ENCODE measurements at regions of chrX and their contacts with region 1.

Region 1: DNA sequence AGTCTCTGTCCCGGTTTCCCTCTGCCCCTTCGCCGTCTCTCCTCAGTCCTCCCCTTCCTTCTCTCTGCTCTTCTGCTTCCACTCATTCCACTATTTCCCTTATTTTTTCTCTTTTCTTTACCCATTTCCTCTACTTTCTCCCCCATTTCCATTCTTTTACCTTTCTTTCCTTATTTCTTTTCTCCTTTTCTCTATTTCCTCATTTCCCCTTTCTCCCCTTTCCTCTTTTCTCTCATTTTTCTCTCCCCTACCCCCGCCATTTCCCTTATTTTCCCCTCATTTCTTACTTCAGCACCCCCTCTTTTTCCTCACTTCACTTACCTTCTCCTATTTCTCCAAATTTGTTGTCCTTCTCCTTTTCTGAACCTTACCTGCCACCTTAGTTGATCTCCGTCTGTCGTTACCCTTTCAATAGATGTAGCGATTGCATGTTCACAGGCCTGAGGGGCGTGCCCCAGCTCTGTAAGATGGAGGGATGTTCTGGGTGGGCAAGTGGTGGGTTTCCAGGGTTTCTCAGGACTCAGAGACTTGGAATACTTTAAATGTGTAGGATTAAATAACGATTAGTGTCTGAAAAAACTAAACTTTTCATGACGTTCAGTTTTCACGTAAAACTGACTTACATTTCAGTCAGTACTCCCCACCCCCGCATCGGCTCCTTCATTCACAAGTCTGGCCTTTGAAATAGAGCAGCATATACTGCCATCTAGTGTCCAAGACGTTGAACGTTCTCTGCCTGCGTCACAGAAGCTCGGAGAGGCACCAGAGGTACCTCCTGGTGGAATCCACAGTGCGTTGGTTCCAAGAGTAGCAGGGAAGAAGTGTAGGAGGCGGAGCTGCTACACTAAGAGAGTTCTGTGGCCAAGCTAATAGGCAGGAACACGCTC is 641 bp upstream of the NCBP2L start:
- DNase-seq: peak; percentile 84
- H3K4me3 Mint-ChIP-seq: peak overlapping the region; percentile 78
- H3K27ac Mint-ChIP-seq: peak overlapping the region; percentile 73
- H3K4me1 Mint-ChIP-seq: peaks cover 12% of the 10 kb centered on the region
- H3K27me3 Mint-ChIP-seq: peaks cover 6% of the 10 kb centered on the region

Region 2: GRCh38 chrX:107654872-107655761 is 121.8 kb before region 1 on chrX:
- CTCF ChIA-PET with region 1: interaction called, 25 read pairs
- POLR2A ChIA-PET with region 1: no interaction called
- DNase-seq: peak; percentile 70
- H3K4me3 Mint-ChIP-seq: no peak overlapping the region
- H3K27ac Mint-ChIP-seq: peak overlapping the region; percentile 73
- H3K4me1 Mint-ChIP-seq: peaks cover 14% of the 10 kb centered on the region
- H3K27me3 Mint-ChIP-seq: no peaks in the 10 kb centered on the region

Region 3: DNA sequence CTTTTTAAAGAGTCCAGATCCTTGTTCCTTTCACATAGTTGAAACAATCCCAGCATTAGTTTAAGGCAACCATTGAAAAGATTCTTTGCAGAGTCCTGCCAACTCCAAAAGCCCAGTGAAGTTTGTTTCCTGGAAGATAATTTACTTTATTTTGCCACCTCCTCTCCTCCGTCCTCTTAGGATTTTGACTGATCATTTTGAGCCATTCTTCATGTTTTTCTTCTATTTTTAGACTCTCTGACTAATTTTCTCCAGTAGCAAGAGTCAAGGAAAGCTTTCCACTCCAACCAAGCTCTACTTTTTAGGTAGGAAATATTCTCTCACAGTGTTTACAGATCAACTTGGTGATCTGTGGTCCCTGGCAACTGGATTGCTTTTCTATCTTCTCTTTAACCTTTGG is 10.9 kb after region 1 on chrX:
- CTCF ChIA-PET with region 1: interaction called, 11 read pairs
- POLR2A ChIA-PET with region 1: no interaction called
- DNase-seq: no peak
- H3K4me3 Mint-ChIP-seq: no peak overlapping the region
- H3K27ac Mint-ChIP-seq: no peak overlapping the region
- H3K4me1 Mint-ChIP-seq: no peaks in the 10 kb centered on the region
- H3K27me3 Mint-ChIP-seq: peaks cover 5% of the 10 kb centered on the region

Measured in activated CD4-positive, alpha-beta T cell treated with anti-CD3 and anti-CD28 coated beads, Interleukin-2, amount 10 ng/mL, durations not matched to agents 7 days and 5 days (primary cell).